Activated T-helper 2 cell treated with anti-CD3 and anti-CD28 coated beads, Interferon-gamma antibody, Interleukin-2, Interleukin-4, amounts not matched to agents 10 μg/mL and 5 μg/mL and 100 μg/mL, durations not matched to agents 14 hours and 24 hours and 36 hours (primary cell): ENCODE measurements at regions of chr11 and their contacts with region 1.

Region 1: DNA sequence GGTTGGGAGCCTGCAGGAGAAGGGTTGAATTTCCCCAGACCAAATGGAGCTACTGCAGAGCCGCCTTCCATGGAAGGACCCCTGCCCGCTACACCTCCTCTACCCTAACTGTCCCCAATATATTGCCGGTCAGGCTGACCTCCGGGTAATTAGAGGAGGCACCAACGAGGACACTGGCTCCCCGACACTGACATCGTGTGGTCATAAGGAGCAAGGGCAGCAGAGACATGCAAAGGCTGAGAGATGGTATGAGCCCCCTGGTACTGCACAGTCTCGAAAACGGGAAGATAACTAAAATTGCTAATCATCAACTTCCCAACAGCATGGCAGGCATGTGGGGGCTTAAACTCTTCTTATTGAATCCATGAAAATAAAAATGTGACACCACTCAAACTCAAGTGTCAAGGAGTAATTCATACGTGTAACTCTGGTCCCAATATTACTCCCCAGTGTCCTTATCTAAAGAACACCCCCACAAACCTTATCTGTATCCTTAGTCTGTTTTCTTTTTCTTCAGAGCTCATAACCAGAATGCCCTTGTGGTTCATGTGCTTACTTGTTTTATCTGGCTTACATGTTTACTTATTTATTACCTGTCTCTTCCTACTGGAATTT is 4.4 kb downstream of the CAVIN3 start:
- DNase-seq: peak; percentile 16
- H3K4me3 Mint-ChIP-seq: no peak overlapping the region
- H3K27ac Mint-ChIP-seq: no peak overlapping the region
- H3K4me1 Mint-ChIP-seq: peaks cover 18% of the 10 kb centered on the region
- H3K27me3 Mint-ChIP-seq: peaks cover 20% of the 10 kb centered on the region

Region 2: GRCh38 chr11:5690216-5690615 is 625.7 kb before region 1 on chr11:
- intact Hi-C with region 1: loop called (anchors 2 kb)
- DNase-seq: no peak
- H3K4me3 Mint-ChIP-seq: peak overlapping the region; percentile 91
- H3K27ac Mint-ChIP-seq: peak overlapping the region; percentile 89
- H3K4me1 Mint-ChIP-seq: peaks cover 42% of the 10 kb centered on the region
- H3K27me3 Mint-ChIP-seq: no peaks in the 10 kb centered on the region

Region 3: GRCh38 chr11:6194065-6194581 is 121.8 kb before region 1 on chr11:
- intact Hi-C with region 1: loop called (anchors 1 kb)
- DNase-seq: no peak
- H3K4me3 Mint-ChIP-seq: no peak overlapping the region
- H3K27ac Mint-ChIP-seq: peak overlapping the region; percentile 54
- H3K4me1 Mint-ChIP-seq: peaks cover 29% of the 10 kb centered on the region
- H3K27me3 Mint-ChIP-seq: peaks cover 6% of the 10 kb centered on the region

Region 4: DNA sequence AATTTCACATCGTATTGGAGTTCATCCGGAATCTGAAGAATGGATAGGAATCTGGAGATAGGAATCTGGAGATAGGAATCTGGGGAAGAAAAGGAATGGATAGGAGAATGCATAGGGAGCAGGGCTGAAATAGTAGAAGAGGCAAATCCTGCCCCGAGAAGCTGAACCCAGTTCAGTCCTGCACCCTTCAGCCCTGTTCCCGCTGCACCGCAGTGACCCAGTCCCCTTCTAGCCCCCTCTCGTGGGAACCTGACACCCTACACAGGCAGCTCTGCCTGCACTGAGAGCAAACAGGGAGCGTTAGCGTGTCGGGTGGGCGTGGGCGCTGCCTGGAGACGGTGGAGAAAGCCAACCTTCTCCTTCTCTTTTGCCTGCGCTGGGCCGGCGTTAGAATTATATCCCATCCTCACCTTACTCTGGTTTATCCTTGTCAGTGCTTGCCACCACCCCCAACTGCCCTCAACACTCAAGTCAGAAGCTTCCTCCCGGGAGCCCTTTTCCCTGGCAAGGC is 57.3 kb before region 1 on chr11:
- intact Hi-C with region 1: loop called (anchors 5 kb)
- DNase-seq: no peak
- H3K4me3 Mint-ChIP-seq: no peak overlapping the region
- H3K27ac Mint-ChIP-seq: no peak overlapping the region
- H3K4me1 Mint-ChIP-seq: no peaks in the 10 kb centered on the region
- H3K27me3 Mint-ChIP-seq: peaks cover 18% of the 10 kb centered on the region

Region 5: GRCh38 chr11:6285576-6285975 is 30.3 kb before region 1 on chr11:
- intact Hi-C with region 1: no loop called
- DNase-seq: no peak
- H3K4me3 Mint-ChIP-seq: no peak overlapping the region
- H3K27ac Mint-ChIP-seq: no peak overlapping the region
- H3K4me1 Mint-ChIP-seq: no peaks in the 10 kb centered on the region
- H3K27me3 Mint-ChIP-seq: peaks cover 56% of the 10 kb centered on the region

Region 6: DNA sequence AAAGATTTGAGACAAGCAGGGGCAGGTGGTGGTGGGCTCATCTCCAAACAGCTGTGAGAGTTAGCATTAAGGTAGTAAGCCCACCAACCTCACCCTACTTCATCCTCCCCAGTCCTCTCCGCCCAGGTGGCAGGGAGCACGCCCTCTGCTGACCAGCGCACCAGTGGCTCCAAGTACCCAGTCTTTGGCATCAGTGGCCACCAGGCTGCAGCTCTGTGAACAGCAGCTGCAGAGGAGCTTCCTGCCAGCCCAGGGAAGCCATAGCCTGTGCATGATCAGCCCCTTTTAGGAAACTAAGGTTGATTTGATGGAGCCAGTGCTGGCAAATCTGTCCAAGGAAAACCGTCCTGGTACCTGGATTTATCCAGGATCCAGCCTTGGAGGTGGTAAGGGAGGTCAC is 17.3 kb before region 1 on chr11:
- intact Hi-C with region 1: no loop called
- DNase-seq: no peak
- H3K4me3 Mint-ChIP-seq: no peak overlapping the region
- H3K27ac Mint-ChIP-seq: no peak overlapping the region
- H3K4me1 Mint-ChIP-seq: no peaks in the 10 kb centered on the region
- H3K27me3 Mint-ChIP-seq: peaks cover 5% of the 10 kb centered on the region

Region 7: GRCh38 chr11:6389921-6390724 is 74.2 kb after region 1 on chr11 and contains the start of gene SMPD1:
- intact Hi-C with region 1: loop called (anchors 1 kb)
- DNase-seq: peak; percentile 89
- H3K4me3 Mint-ChIP-seq: peak within 1 kb of the TSS; percentile 87
- H3K27ac Mint-ChIP-seq: peak within 1 kb of the TSS; percentile 98
- H3K4me1 Mint-ChIP-seq: peaks cover 24% of the 10 kb centered on the region
- H3K27me3 Mint-ChIP-seq: no peaks in the 10 kb centered on the region
- total RNA-seq, gene SMPD1: 15.4 and 16.0 TPM in 2 replicates

Region 8: DNA sequence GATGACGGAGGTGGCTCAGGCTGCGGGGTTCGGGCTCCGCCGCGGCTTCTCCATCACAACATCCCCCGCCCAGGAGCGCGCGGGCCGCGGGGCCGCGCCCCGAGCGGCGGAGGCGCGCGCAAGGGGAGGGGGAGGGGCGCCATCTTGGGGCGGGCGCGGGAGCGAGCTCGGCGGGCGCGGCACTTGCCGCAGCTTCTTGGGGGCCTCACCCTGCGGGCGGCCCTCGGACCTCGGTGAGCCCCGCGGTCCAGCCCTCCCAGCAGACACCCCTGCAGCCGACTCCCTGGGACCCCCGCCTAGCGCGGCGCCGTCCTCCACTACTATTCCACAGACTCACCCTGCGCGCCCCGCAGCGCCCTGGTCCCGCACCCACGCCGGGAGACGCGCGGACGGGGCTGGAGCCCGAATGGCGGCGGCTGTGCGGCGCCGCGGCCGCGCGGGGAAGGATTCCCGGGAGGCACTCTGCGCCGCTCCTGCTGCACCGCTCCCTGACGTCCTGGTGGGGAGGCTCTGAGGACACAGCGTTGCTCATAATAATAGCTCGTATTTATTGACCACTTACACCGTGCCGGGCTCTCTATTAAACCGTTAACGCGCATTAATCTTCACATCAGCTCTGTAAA is 103.2 kb after region 1 on chr11 and contains the start of gene APBB1:
- intact Hi-C with region 1: loop called (anchors 5 kb)
- DNase-seq: peak; percentile 68
- H3K4me3 Mint-ChIP-seq: peak within 1 kb of the TSS; percentile 72
- H3K27ac Mint-ChIP-seq: peak within 1 kb of the TSS; percentile 25
- H3K4me1 Mint-ChIP-seq: peaks cover 4% of the 10 kb centered on the region
- H3K27me3 Mint-ChIP-seq: peaks cover 31% of the 10 kb centered on the region
- total RNA-seq, gene APBB1: 31.0 and 33.0 TPM in 2 replicates

Region 9: GRCh38 chr11:6603287-6604080 is 287.6 kb after region 1 on chr11 and contains the starts of genes ILK and RRP8:
- intact Hi-C with region 1: loop called (anchors 5 kb)
- DNase-seq: peak; percentile 84
- H3K4me3 Mint-ChIP-seq: no peak within 1 kb of the TSS
- H3K27ac Mint-ChIP-seq: no peak within 1 kb of the TSS
- H3K4me1 Mint-ChIP-seq: peaks cover 38% of the 10 kb centered on the region
- H3K27me3 Mint-ChIP-seq: no peaks in the 10 kb centered on the region
- total RNA-seq, gene ILK: 99.5 and 105 TPM in 2 replicates
- total RNA-seq, gene RRP8: 29.4 and 30.1 TPM in 2 replicates